ENCODE measurements at regions of chr12 and their contacts with region 1.

Region 1: GRCh38 chr12:92570056-92570753 is 132.6 kb upstream of the PLEKHG7 start:
- DNase-seq: peak; percentile 80
- H3K4me3 ChIP-seq: no peak overlapping the region
- H3K27ac ChIP-seq: no peak overlapping the region
- H3K4me1 ChIP-seq: peaks cover 27% of the 10 kb centered on the region
- H3K27me3 ChIP-seq: no peaks in the 10 kb centered on the region
- CTCF ChIP-seq: peak; percentile 51 to 69

Region 2: DNA sequence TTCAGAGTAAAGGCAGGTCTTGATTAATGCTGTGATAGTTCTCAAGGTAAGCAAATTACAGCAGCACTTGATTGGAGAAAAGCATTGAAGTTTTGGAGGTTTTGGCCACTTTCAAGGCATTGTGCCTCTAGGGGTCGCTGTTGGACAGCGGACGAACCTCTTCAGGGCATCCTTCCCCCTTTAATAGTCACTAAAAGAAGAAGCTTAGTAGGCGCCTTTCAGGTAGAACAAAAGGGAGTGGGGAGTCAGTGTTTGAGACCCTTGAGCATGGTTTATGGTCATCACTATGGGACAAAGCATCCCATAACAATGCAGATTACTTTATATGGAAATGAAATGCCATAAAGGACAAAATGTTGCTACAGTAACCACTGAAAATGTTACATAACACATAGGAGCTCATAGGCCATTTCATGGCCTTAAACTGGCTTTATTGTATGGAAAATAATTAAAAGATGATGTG is 1188.1 kb before region 1 on chr12:
- CTCF ChIA-PET with region 1: interaction called, 4 read pairs
- dilution Hi-C with region 1: no loop called
- in situ Hi-C with region 1: loop called in 1 of 2 experiments (anchors 25 kb)
- intact Hi-C with region 1: loop called (anchors 1 kb)
- DNase-seq: peak; percentile 72
- H3K4me3 ChIP-seq: peak overlapping the region; percentile 39 to 45 (median 43)
- H3K27ac ChIP-seq: no peak overlapping the region
- H3K4me1 ChIP-seq: peaks cover 6% of the 10 kb centered on the region
- H3K27me3 ChIP-seq: no peaks in the 10 kb centered on the region
- CTCF ChIP-seq: peak; percentile 65 to 90

Region 3: GRCh38 chr12:91811481-91812287 is 758.5 kb before region 1 on chr12:
- CTCF ChIA-PET with region 1: no interaction called
- dilution Hi-C with region 1: no loop called
- in situ Hi-C with region 1: no loop called
- intact Hi-C with region 1: loop called (anchors 1 kb)
- DNase-seq: peak; percentile 39
- H3K4me3 ChIP-seq: no peak overlapping the region
- H3K27ac ChIP-seq: no peak overlapping the region
- H3K4me1 ChIP-seq: peaks cover 6% of the 10 kb centered on the region
- H3K27me3 ChIP-seq: no peaks in the 10 kb centered on the region
- CTCF ChIP-seq: peak; percentile 75 to 79

Region 4: DNA sequence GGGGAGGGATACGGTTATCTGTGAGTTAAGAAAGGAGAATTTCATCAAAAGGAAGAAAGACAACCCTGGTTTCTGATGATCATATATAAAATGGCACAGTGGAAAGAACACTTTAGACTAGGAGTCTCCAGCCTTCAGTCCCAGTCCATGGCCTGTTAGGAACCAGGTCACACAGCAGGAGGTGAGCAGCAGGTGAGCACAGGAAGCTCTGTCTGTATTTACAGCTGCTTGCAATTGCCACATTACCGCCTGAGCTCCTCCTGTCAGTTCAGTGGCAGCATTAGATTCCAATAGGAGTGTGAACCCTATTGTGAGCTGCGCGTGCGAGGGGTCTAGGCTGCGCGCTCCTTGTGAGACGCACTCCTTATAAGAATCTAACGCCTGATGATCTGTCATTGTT is 562.4 kb before region 1 on chr12:
- CTCF ChIA-PET with region 1: no interaction called
- dilution Hi-C with region 1: no loop called
- in situ Hi-C with region 1: no loop called
- intact Hi-C with region 1: loop called (anchors 1 kb)
- DNase-seq: no peak
- H3K4me3 ChIP-seq: no peak overlapping the region
- H3K27ac ChIP-seq: no peak overlapping the region
- H3K4me1 ChIP-seq: no peaks in the 10 kb centered on the region
- H3K27me3 ChIP-seq: no peaks in the 10 kb centered on the region
- CTCF ChIP-seq: no peak

Region 5: GRCh38 chr12:92408072-92408900 is 161.9 kb before region 1 on chr12:
- CTCF ChIA-PET with region 1: no interaction called
- dilution Hi-C with region 1: no loop called
- in situ Hi-C with region 1: no loop called
- intact Hi-C with region 1: loop called (anchors 2 kb)
- DNase-seq: peak; percentile 55
- H3K4me3 ChIP-seq: no peak overlapping the region
- H3K27ac ChIP-seq: no peak overlapping the region
- H3K4me1 ChIP-seq: no peaks in the 10 kb centered on the region
- H3K27me3 ChIP-seq: no peaks in the 10 kb centered on the region
- CTCF ChIP-seq: peak; percentile 66 to 75

Region 6: GRCh38 chr12:92608151-92609091 is 38.2 kb after region 1 on chr12:
- CTCF ChIA-PET with region 1: interaction called, 9 read pairs
- dilution Hi-C with region 1: no loop called
- in situ Hi-C with region 1: no loop called
- intact Hi-C with region 1: loop called (anchors 1 kb)
- DNase-seq: peak; percentile 67
- H3K4me3 ChIP-seq: no peak overlapping the region
- H3K27ac ChIP-seq: no peak overlapping the region
- H3K4me1 ChIP-seq: peaks cover 18% of the 10 kb centered on the region
- H3K27me3 ChIP-seq: no peaks in the 10 kb centered on the region
- CTCF ChIP-seq: peak; percentile 61 to 70

Measured in mammary epithelial cell (primary cell).